GM12878 (cell line): ENCODE measurements at regions of chr2 and their contacts with region 1.

Region 1: DNA sequence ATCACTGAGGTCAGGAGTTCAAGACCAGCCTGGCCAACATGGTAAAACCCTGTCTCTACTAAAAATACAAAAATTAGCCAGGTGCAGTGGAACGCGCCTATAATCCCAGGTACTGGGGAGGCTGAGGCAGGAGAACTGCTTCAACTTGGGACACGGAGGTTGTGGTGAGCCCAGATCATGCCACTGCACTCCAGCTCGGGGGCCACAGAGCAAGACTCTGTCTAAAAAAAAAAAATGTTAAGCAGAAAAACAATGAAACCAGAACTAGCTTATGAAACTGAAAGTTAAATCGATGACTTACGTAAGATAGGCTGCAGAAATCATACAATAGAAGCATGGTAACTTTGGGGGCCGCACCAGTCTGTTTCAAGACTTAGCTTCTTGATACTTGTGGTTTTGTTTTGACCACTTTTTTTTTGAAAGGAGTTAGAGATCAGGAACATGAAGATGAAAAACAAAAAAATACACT is 6.2 kb upstream of the GPR155 start:
- DNase-seq: peak; percentile 85
- ATAC-seq: peak; percentile 94
- H3K4me3 ChIP-seq: peak overlapping the region; percentile 41
- H3K27ac ChIP-seq: peak overlapping the region; percentile 87
- H3K4me1 ChIP-seq: peaks cover 17% of the 10 kb centered on the region; the same call in 1 of the 2 replicates
- H3K27me3 ChIP-seq: no peaks in the 10 kb centered on the region
- CTCF ChIP-seq: no peak
- EP300 ChIP-seq: peak; percentile 33 to 65; a peak in 2 of 4 replicates
- POLR2A ChIP-seq: no peak
- RAD21 ChIP-seq: no peak

Region 2: DNA sequence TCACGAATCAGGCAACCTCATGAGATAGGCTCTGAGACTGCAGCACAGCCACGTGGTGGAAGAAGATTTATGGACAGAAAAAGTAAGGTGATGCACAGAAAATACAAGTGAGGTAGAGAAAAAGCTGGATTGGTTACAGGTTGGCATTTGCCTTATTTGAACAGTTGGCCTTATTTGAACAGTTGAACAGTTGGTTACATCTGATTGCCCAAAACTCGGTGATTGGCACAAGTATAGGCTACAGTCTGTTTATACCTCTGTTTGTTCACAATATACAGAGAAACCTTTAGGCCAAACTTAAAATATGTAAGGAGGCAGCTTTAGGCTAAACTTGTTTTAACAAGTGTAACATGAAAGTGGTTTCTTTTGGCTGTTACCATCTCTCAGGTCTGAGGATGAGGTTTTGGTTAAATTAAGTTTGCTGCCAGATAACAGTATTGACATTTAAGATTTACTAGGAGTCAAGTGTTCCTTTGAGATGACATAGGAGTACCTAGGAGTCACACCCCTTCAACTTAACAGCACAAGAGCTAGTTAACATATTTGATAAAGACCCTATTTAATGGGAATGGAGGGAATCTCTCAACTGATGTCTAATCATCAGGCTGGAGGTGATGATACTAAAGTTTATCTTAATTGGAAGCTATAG is 10.3 kb after region 1 on chr2:
- CTCF ChIA-PET with region 1: interaction called, 5 read pairs
- POLR2A ChIA-PET with region 1: interaction called, 4 read pairs
- RAD21 ChIA-PET with region 1: interaction called, 3 read pairs
- SMC1A ChIA-PET with region 1: interaction called, 12 read pairs
- in situ Hi-C with region 1: no loop called
- intact Hi-C with region 1: no loop called
- DNase-seq: no peak
- ATAC-seq: no peak
- H3K4me3 ChIP-seq: no peak overlapping the region
- H3K27ac ChIP-seq: no peak overlapping the region
- H3K4me1 ChIP-seq: no peaks in the 10 kb centered on the region
- H3K27me3 ChIP-seq: no peaks in the 10 kb centered on the region
- CTCF ChIP-seq: no peak
- EP300 ChIP-seq: no peak
- POLR2A ChIP-seq: no peak
- RAD21 ChIP-seq: no peak

Region 3: GRCh38 chr2:174516501-174517378 is 23.7 kb after region 1 on chr2:
- CTCF ChIA-PET with region 1: interaction called, 3 read pairs
- POLR2A ChIA-PET with region 1: no interaction called
- RAD21 ChIA-PET with region 1: interaction called, 3 read pairs
- SMC1A ChIA-PET with region 1: interaction called, 16 read pairs
- in situ Hi-C with region 1: no loop called
- intact Hi-C with region 1: no loop called
- DNase-seq: no peak
- ATAC-seq: peak; percentile 62
- H3K4me3 ChIP-seq: no peak overlapping the region
- H3K27ac ChIP-seq: no peak overlapping the region
- H3K4me1 ChIP-seq: peaks cover 9% of the 10 kb centered on the region
- H3K27me3 ChIP-seq: peaks cover 0 to 2% of the 10 kb centered on the region in 2 experiments; a peak in 1 of 4 replicates
- CTCF ChIP-seq: no peak
- EP300 ChIP-seq: no peak
- POLR2A ChIP-seq: no peak
- RAD21 ChIP-seq: no peak

Region 4: GRCh38 chr2:174522553-174522952 is 29.6 kb after region 1 on chr2:
- CTCF ChIA-PET with region 1: interaction called, 3 read pairs
- POLR2A ChIA-PET with region 1: no interaction called
- RAD21 ChIA-PET with region 1: interaction called, 3 read pairs
- SMC1A ChIA-PET with region 1: interaction called, 16 read pairs
- in situ Hi-C with region 1: no loop called
- intact Hi-C with region 1: no loop called
- DNase-seq: no peak
- ATAC-seq: no peak
- H3K4me3 ChIP-seq: no peak overlapping the region
- H3K27ac ChIP-seq: no peak overlapping the region
- H3K4me1 ChIP-seq: no peaks in the 10 kb centered on the region
- H3K27me3 ChIP-seq: peaks cover 0 to 2% of the 10 kb centered on the region in 2 experiments; a peak in 1 of 4 replicates
- CTCF ChIP-seq: peak in 1 of 3 experiments; percentile 39; a peak in 2 of 6 replicates
- EP300 ChIP-seq: no peak
- POLR2A ChIP-seq: no peak
- RAD21 ChIP-seq: peak; percentile 54